Prostate gland (tissue), 2 donors: ENCODE measurements at regions of chr2 and their contacts with region 1.

Region 1: DNA sequence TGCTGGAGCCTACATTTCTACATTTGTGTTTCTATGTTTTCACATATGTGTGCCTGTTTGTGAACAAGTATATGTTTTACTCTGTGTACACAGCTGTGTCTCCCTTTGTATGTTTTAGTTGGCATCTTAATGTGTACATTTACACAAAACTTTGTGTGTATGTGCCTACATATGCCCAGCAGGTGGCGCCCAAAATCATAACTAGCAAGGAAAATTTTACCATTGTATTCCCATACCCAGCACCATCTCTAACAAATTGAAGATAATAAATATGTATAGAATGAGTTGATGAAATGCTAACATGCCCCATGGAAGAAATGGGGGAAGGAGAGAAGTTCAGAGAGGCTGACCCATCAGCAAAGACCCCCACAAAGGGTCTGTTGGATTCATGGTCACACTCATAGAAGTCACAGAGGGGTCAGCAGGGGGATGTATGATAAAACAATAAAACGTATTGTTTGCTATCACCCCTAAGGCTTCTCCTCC is 48.1 kb downstream of the PKDCC start:
- DNase-seq: peak; percentile 83
- H3K4me3 ChIP-seq: no peak overlapping the region
- H3K27ac ChIP-seq: no peak overlapping the region
- H3K4me1 ChIP-seq: no peaks in the 10 kb centered on the region
- H3K27me3 ChIP-seq: no peaks in the 10 kb centered on the region
- CTCF ChIP-seq: peak; percentile 75 to 98 (median 94)
- POLR2A ChIP-seq: no peak

Region 2: GRCh38 chr2:42147641-42148274 is 51.8 kb after region 1 on chr2:
- intact Hi-C with region 1: no loop called
- DNase-seq: no peak
- H3K4me3 ChIP-seq: no peak overlapping the region
- H3K27ac ChIP-seq: peak overlapping the region in 1 of 2 donors; percentile 15
- H3K4me1 ChIP-seq: peaks cover 5% of the 10 kb centered on the region
- H3K27me3 ChIP-seq: no peaks in the 10 kb centered on the region
- CTCF ChIP-seq: no peak
- POLR2A ChIP-seq: no peak

Region 3: DNA sequence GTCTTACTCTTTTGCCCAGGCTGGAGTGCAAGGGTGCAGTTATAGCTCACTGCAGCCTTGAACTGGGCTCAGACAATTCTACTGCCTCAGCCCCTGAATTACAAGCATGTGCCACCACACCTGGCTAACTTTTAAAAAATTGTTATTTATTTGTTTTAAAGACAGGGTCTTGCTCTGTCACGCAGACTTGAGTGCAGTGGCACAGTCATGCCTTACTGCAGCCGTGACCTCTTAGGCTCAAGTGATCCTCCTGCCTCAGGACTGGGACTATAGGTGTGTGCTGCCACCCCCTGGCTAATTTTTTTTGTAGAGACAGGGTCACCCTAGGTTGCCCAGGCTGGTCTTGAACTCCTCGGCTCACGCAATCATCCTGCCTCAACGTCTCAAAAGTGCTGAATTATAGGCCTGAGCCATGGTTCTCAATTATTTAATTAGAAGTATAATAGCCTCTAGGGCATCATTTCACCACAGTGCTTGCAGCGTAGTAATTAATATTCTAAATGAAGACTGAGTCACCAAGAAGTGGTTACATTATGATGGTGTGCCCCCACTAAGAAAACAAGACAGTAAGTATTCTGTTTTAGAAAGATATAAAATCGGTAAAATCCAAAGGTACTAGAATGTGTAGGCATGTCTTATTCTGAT is 142.8 kb after region 1 on chr2:
- intact Hi-C with region 1: loop called (anchors 5 kb)
- DNase-seq: peak; percentile 10
- H3K4me3 ChIP-seq: no peak overlapping the region
- H3K27ac ChIP-seq: no peak overlapping the region
- H3K4me1 ChIP-seq: no peaks in the 10 kb centered on the region
- H3K27me3 ChIP-seq: no peaks in the 10 kb centered on the region
- CTCF ChIP-seq: peak in 3 of 4 experiments; percentile 43 to 50 (median 48)
- POLR2A ChIP-seq: no peak

Region 4: GRCh38 chr2:42328148-42328833 is 232.3 kb after region 1 on chr2:
- intact Hi-C with region 1: loop called (anchors 2 kb)
- DNase-seq: no peak
- H3K4me3 ChIP-seq: no peak overlapping the region
- H3K27ac ChIP-seq: no peak overlapping the region
- H3K4me1 ChIP-seq: no peaks in the 10 kb centered on the region
- H3K27me3 ChIP-seq: no peaks in the 10 kb centered on the region
- CTCF ChIP-seq: peak in 3 of 4 experiments; percentile 66 to 81 (median 74)
- POLR2A ChIP-seq: no peak

Region 5: GRCh38 chr2:42360890-42361727 is 265.1 kb after region 1 on chr2 and contains the start of gene COX7A2L:
- intact Hi-C with region 1: loop called (anchors 10 kb)
- DNase-seq: peak; percentile 97
- H3K4me3 ChIP-seq: peak within 1 kb of the TSS; percentile 90 to 94
- H3K27ac ChIP-seq: peak within 1 kb of the TSS; percentile 92 to 95
- H3K4me1 ChIP-seq: no peaks in the 10 kb centered on the region
- H3K27me3 ChIP-seq: no peaks in the 10 kb centered on the region
- CTCF ChIP-seq: peak in 2 of 4 experiments; percentile 14 to 33
- POLR2A ChIP-seq: peak; percentile 70
- total RNA-seq, gene COX7A2L: 167 to 170 TPM